Cardiac septum (tissue), 1 donor: ENCODE measurements at regions of chr21 and their contacts with region 1.

Region 1: DNA sequence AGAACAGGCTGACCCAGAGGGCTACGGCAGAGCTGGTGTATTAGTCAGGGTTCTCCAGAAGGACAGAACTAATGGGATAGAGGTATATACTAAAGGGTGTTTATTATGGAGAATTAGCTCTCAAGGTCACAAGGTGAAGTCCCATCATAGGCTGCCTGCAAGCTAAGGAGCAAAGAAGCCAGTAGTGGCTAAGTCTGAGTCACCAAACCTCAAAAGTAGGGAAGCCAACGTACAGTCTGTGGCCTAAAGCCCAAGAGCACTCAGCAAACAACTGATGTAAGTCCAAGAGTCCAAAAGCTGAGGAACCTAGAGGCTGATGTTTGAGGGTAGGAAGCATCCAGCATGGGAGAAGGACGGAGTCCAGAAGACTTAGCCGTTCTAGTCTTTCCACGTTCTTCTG is 179.2 kb downstream of the BACH1 start:
- DNase-seq: no peak

Region 2: GRCh38 chr21:29849735-29850176 is 371.8 kb after region 1 on chr21:
- intact Hi-C with region 1: loop called (anchors 2 kb)
- DNase-seq: no peak

Region 3: GRCh38 chr21:30097791-30098190 is 619.9 kb after region 1 on chr21:
- intact Hi-C with region 1: no loop called
- DNase-seq: no peak